ENCODE measurements at regions of chr21 and their contacts with region 1.

Region 1: GRCh38 chr21:42187976-42188653 is 30.8 kb upstream of the ABCG1 start:
- DNase-seq: peak; percentile 92
- ATAC-seq: peak; percentile 99
- H3K4me3 ChIP-seq: peak overlapping the region; percentile 29; the same call in 1 of the 2 replicates
- H3K27ac ChIP-seq: peak overlapping the region; percentile 92
- H3K4me1 ChIP-seq: peaks cover 19% of the 10 kb centered on the region
- H3K27me3 ChIP-seq: no peaks in the 10 kb centered on the region
- CTCF ChIP-seq: no peak
- EP300 ChIP-seq: no peak; a peak in 1 of 4 replicates
- POLR2A ChIP-seq: peak; percentile 72
- RAD21 ChIP-seq: no peak

Region 2: GRCh38 chr21:41861987-41862386 is 326.1 kb before region 1 on chr21:
- CTCF ChIA-PET with region 1: no interaction called
- POLR2A ChIA-PET with region 1: no interaction called
- RAD21 ChIA-PET with region 1: no interaction called
- SMC1A ChIA-PET with region 1: no interaction called
- in situ Hi-C with region 1: no loop called
- intact Hi-C with region 1: no loop called
- DNase-seq: no peak
- ATAC-seq: peak; percentile 49
- H3K4me3 ChIP-seq: peak overlapping the region; percentile 58
- H3K27ac ChIP-seq: peak overlapping the region; percentile 91
- H3K4me1 ChIP-seq: peaks cover 51% of the 10 kb centered on the region
- H3K27me3 ChIP-seq: no peaks in the 10 kb centered on the region
- CTCF ChIP-seq: peak; percentile 43 to 60 (median 49); a peak in 5 of 6 replicates
- EP300 ChIP-seq: no peak
- POLR2A ChIP-seq: no peak
- RAD21 ChIP-seq: peak; percentile 47; the same call in 1 of the 2 replicates

Region 3: GRCh38 chr21:42009831-42010523 is 178.1 kb before region 1 on chr21 and contains the start of gene ZBTB21:
- CTCF ChIA-PET with region 1: no interaction called
- POLR2A ChIA-PET with region 1: no interaction called
- RAD21 ChIA-PET with region 1: no interaction called
- SMC1A ChIA-PET with region 1: no interaction called
- in situ Hi-C with region 1: no loop called
- intact Hi-C with region 1: no loop called
- DNase-seq: peak; percentile 96
- ATAC-seq: peak; percentile 89
- H3K4me3 ChIP-seq: peak within 1 kb of the TSS; percentile 81
- H3K27ac ChIP-seq: peak within 1 kb of the TSS; percentile 96
- H3K4me1 ChIP-seq: peaks cover 5% of the 10 kb centered on the region
- H3K27me3 ChIP-seq: no peaks in the 10 kb centered on the region
- CTCF ChIP-seq: no peak
- EP300 ChIP-seq: peak in 1 of 2 experiments; percentile 27; a peak in 1 of 4 replicates
- POLR2A ChIP-seq: peak; percentile 79
- RAD21 ChIP-seq: no peak
- polyA plus RNA-seq, gene ZBTB21: 1.8 to 2.3 TPM

Region 4: DNA sequence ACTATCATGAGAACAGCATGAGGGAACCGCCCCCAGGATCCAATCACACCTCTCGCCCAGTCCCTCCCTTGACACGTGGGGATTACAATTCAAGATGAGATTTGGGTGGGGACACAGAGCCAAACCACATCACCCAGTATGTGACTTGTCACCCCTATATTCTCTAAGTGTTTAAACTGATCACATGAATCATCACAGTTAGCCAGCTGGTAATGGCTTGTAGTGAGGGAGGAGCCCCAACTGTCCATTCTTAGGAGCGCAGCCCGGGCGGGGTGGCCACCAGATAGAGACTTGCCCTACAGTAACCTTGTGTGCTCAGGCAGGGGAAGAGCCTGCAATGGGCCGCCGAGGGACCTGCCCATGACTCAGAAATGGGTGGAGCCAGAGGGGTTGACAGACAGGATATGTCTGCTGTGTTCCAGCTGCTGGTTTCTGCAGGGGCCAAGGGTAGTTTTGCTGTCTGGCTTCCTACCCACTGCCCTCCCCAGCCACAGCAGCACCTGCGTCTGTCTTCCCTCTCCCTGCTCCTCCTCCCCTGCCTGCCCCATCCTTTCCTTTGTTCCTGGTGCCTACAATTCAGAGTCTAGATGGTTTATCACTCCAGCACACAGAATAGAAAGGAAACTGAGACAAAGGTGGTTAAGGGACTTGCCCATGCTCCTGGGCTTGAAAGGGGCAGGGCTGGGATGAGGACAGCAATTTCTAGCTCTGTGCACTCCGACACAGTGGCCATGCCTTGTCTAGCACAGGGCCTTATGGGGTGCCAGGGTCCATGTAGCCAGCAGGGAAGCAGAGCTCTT is 40.0 kb after region 1 on chr21:
- CTCF ChIA-PET with region 1: interaction called, 5 read pairs
- POLR2A ChIA-PET with region 1: interaction called, 6 read pairs
- RAD21 ChIA-PET with region 1: interaction called, 8 read pairs
- SMC1A ChIA-PET with region 1: interaction called, 13 read pairs
- in situ Hi-C with region 1: no loop called
- intact Hi-C with region 1: loop called (anchors 5 kb)
- DNase-seq: peak; percentile 85
- ATAC-seq: peak; percentile 92
- H3K4me3 ChIP-seq: no peak overlapping the region
- H3K27ac ChIP-seq: peak overlapping the region; percentile 22
- H3K4me1 ChIP-seq: peaks cover 31% of the 10 kb centered on the region
- H3K27me3 ChIP-seq: no peaks in the 10 kb centered on the region
- CTCF ChIP-seq: no peak
- EP300 ChIP-seq: peak in 1 of 2 experiments; percentile 55; a peak in 1 of 4 replicates
- POLR2A ChIP-seq: no peak
- RAD21 ChIP-seq: no peak

Measured in GM12878 (cell line).